GM12878 (cell line): ENCODE measurements at regions of chr3 and their contacts with region 1.

Region 1: DNA sequence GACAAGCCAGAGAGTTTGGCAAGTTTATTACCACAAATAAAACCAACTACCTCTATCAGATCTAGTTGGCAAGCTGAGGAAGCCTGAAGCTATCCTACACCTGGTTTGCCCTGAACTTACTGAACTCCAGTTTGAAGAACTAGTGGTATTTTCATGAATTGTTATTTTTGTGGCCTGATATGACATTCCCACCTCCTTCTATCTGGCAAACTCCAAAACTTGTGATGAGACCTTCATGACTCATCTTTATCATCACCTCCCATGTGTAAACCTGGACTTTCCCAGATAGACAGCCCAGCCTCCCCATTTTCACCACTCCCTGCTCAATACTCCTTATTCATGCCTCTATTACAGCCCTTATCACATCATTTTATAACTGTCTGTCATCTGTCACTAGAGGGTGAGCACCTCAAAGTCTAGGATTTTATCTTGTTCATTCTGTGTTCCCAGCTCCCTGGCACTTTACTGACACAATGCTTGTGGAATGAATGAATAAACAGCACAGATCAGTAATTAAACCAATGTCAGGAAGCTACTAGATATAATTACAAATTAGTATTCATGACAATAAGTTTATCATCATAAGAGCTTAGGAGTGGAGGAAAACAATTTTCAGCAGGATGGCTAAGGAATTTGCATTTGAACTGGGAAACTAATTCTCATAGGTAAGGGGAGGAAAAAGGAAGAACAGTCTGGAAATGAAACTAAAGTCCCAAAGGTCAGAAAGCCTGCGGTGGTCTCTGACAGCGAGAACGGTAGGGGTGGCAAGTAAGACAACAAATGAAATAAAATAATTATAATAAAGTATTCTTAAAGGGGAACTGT is 13.2 kb upstream of the TRANK1 start:
- DNase-seq: no peak
- ATAC-seq: peak; percentile 20; the same call in 2 of the 3 replicates
- H3K4me3 ChIP-seq: no peak overlapping the region
- H3K27ac ChIP-seq: no peak overlapping the region
- H3K4me1 ChIP-seq: no peaks in the 10 kb centered on the region
- H3K27me3 ChIP-seq: no peaks in the 10 kb centered on the region
- CTCF ChIP-seq: no peak
- EP300 ChIP-seq: no peak
- POLR2A ChIP-seq: no peak
- RAD21 ChIP-seq: no peak

Region 2: GRCh38 chr3:36792342-36792741 is 165.7 kb before region 1 on chr3:
- CTCF ChIA-PET with region 1: interaction called, 25 read pairs
- POLR2A ChIA-PET with region 1: no interaction called
- RAD21 ChIA-PET with region 1: interaction called, 19 read pairs
- SMC1A ChIA-PET with region 1: interaction called, 17 read pairs
- in situ Hi-C with region 1: no loop called
- intact Hi-C with region 1: loop called (anchors 1 kb)
- DNase-seq: no peak
- ATAC-seq: peak; percentile 92
- H3K4me3 ChIP-seq: no peak overlapping the region
- H3K27ac ChIP-seq: no peak overlapping the region
- H3K4me1 ChIP-seq: no peaks in the 10 kb centered on the region
- H3K27me3 ChIP-seq: peaks cover 0 to 2% of the 10 kb centered on the region in 2 experiments; a peak in 1 of 4 replicates
- CTCF ChIP-seq: peak; percentile 44 to 53 (median 53); a peak in 5 of 6 replicates
- EP300 ChIP-seq: no peak
- POLR2A ChIP-seq: no peak
- RAD21 ChIP-seq: peak; percentile 72

Region 3: GRCh38 chr3:36868614-36869436 is 89.2 kb before region 1 on chr3:
- CTCF ChIA-PET with region 1: interaction called, 66 read pairs
- POLR2A ChIA-PET with region 1: interaction called, 3 read pairs
- RAD21 ChIA-PET with region 1: interaction called, 40 read pairs
- SMC1A ChIA-PET with region 1: interaction called, 45 read pairs
- in situ Hi-C with region 1: no loop called
- intact Hi-C with region 1: loop called (anchors 2 kb)
- DNase-seq: peak; percentile 16
- ATAC-seq: peak; percentile 98
- H3K4me3 ChIP-seq: no peak overlapping the region
- H3K27ac ChIP-seq: no peak overlapping the region
- H3K4me1 ChIP-seq: no peaks in the 10 kb centered on the region
- H3K27me3 ChIP-seq: no peaks in the 10 kb centered on the region
- CTCF ChIP-seq: peak; percentile 70 to 78 (median 75)
- EP300 ChIP-seq: no peak
- POLR2A ChIP-seq: no peak
- RAD21 ChIP-seq: peak; percentile 78

Region 4: GRCh38 chr3:36911990-36912804 is 45.9 kb before region 1 on chr3:
- CTCF ChIA-PET with region 1: interaction called, 116 read pairs
- POLR2A ChIA-PET with region 1: interaction called, 3 read pairs
- RAD21 ChIA-PET with region 1: interaction called, 83 read pairs
- SMC1A ChIA-PET with region 1: interaction called, 70 read pairs
- in situ Hi-C with region 1: no loop called
- intact Hi-C with region 1: loop called (anchors 1 kb)
- DNase-seq: peak; percentile 97
- ATAC-seq: peak; percentile 90
- H3K4me3 ChIP-seq: peak overlapping the region; percentile 34; the same call in 1 of the 2 replicates
- H3K27ac ChIP-seq: peak overlapping the region; percentile 75
- H3K4me1 ChIP-seq: peaks cover 23% of the 10 kb centered on the region
- H3K27me3 ChIP-seq: no peaks in the 10 kb centered on the region
- CTCF ChIP-seq: no peak
- EP300 ChIP-seq: peak; percentile 32 to 61; a peak in 3 of 4 replicates
- POLR2A ChIP-seq: no peak
- RAD21 ChIP-seq: no peak

Region 5: GRCh38 chr3:36969540-36970432 is 11.7 kb after region 1 on chr3:
- CTCF ChIA-PET with region 1: interaction called, 30 read pairs
- POLR2A ChIA-PET with region 1: no interaction called
- RAD21 ChIA-PET with region 1: interaction called, 19 read pairs
- SMC1A ChIA-PET with region 1: interaction called, 17 read pairs
- in situ Hi-C with region 1: no loop called
- intact Hi-C with region 1: no loop called
- DNase-seq: peak; percentile 80
- ATAC-seq: peak; percentile 100
- H3K4me3 ChIP-seq: no peak overlapping the region
- H3K27ac ChIP-seq: peak overlapping the region; percentile 38
- H3K4me1 ChIP-seq: peaks cover 9% of the 10 kb centered on the region
- H3K27me3 ChIP-seq: no peaks in the 10 kb centered on the region
- CTCF ChIP-seq: no peak
- EP300 ChIP-seq: peak in 1 of 2 experiments; percentile 45; a peak in 1 of 4 replicates
- POLR2A ChIP-seq: no peak
- RAD21 ChIP-seq: no peak

Region 6: GRCh38 chr3:37041546-37042195 is 83.6 kb after region 1 on chr3:
- CTCF ChIA-PET with region 1: no interaction called
- POLR2A ChIA-PET with region 1: no interaction called
- RAD21 ChIA-PET with region 1: no interaction called
- SMC1A ChIA-PET with region 1: no interaction called
- in situ Hi-C with region 1: no loop called
- intact Hi-C with region 1: no loop called
- DNase-seq: no peak
- ATAC-seq: no peak
- H3K4me3 ChIP-seq: no peak overlapping the region
- H3K27ac ChIP-seq: no peak overlapping the region
- H3K4me1 ChIP-seq: no peaks in the 10 kb centered on the region
- H3K27me3 ChIP-seq: no peaks in the 10 kb centered on the region
- CTCF ChIP-seq: no peak
- EP300 ChIP-seq: no peak
- POLR2A ChIP-seq: no peak
- RAD21 ChIP-seq: no peak

Region 7: GRCh38 chr3:37096288-37096687 is 138.2 kb after region 1 on chr3:
- CTCF ChIA-PET with region 1: no interaction called
- POLR2A ChIA-PET with region 1: no interaction called
- RAD21 ChIA-PET with region 1: no interaction called
- SMC1A ChIA-PET with region 1: no interaction called
- in situ Hi-C with region 1: no loop called
- intact Hi-C with region 1: no loop called
- DNase-seq: no peak
- ATAC-seq: no peak
- H3K4me3 ChIP-seq: no peak overlapping the region
- H3K27ac ChIP-seq: no peak overlapping the region
- H3K4me1 ChIP-seq: no peaks in the 10 kb centered on the region
- H3K27me3 ChIP-seq: no peaks in the 10 kb centered on the region
- CTCF ChIP-seq: no peak
- EP300 ChIP-seq: no peak
- POLR2A ChIP-seq: no peak
- RAD21 ChIP-seq: no peak